Caco-2 (cell line): ENCODE measurements at regions of chr6 and their contacts with region 1.

Region 1: GRCh38 chr6:11496152-11497060 is 41.1 kb upstream of the TMEM170B start:
- DNase-seq: peak; percentile 69 to 84
- H3K4me3 ChIP-seq: no peak overlapping the region
- H3K4me3 Mint-ChIP-seq: no peak overlapping the region
- H3K27ac Mint-ChIP-seq: no peak overlapping the region
- H3K4me1 ChIP-seq: peaks cover 18% of the 10 kb centered on the region; the same call in 1 of the 2 replicates
- H3K4me1 Mint-ChIP-seq: peaks cover 7% of the 10 kb centered on the region
- H3K27me3 ChIP-seq: no peaks in the 10 kb centered on the region
- H3K27me3 Mint-ChIP-seq: no peaks in the 10 kb centered on the region
- CTCF ChIP-seq: peak; percentile 87 to 96

Region 2: DNA sequence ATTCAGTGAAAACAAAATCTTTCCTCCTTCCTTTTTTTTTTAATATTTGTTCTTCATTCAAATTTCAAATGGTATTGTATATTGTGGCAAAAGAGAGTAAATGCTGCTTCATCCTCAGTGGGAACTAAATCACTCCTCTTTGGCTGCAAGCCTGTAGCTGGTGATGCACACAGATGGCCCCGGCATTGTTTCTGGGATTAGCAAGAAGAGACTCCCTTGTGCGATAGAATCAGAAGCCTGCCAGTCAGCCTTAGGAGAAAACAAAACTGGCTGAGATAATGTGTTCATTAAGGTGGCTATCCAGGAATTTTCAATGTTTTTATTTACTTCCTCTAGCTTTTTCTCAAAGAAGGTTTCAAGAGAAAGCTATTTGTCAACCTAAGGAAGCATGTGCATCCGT is 431.6 kb before region 1 on chr6:
- CTCF ChIA-PET with region 1: no interaction called
- POLR2A ChIA-PET with region 1: no interaction called
- intact Hi-C with region 1: loop called (anchors 1 kb)
- DNase-seq: no peak
- H3K4me3 ChIP-seq: no peak overlapping the region
- H3K4me3 Mint-ChIP-seq: no peak overlapping the region
- H3K27ac Mint-ChIP-seq: no peak overlapping the region
- H3K4me1 ChIP-seq: peaks cover 36% of the 10 kb centered on the region
- H3K4me1 Mint-ChIP-seq: peaks cover 32% of the 10 kb centered on the region
- H3K27me3 ChIP-seq: no peaks in the 10 kb centered on the region
- H3K27me3 Mint-ChIP-seq: no peaks in the 10 kb centered on the region
- CTCF ChIP-seq: no peak

Region 3: GRCh38 chr6:11172501-11173332 is 323.7 kb before region 1 on chr6:
- CTCF ChIA-PET with region 1: interaction called, 3 read pairs
- POLR2A ChIA-PET with region 1: no interaction called
- intact Hi-C with region 1: loop called (anchors 1 kb)
- DNase-seq: peak; percentile 46 to 59
- H3K4me3 ChIP-seq: no peak overlapping the region
- H3K4me3 Mint-ChIP-seq: no peak overlapping the region
- H3K27ac Mint-ChIP-seq: no peak overlapping the region
- H3K4me1 ChIP-seq: no peaks in the 10 kb centered on the region; the same call in 1 of the 2 replicates
- H3K4me1 Mint-ChIP-seq: no peaks in the 10 kb centered on the region
- H3K27me3 ChIP-seq: no peaks in the 10 kb centered on the region
- H3K27me3 Mint-ChIP-seq: no peaks in the 10 kb centered on the region
- CTCF ChIP-seq: peak; percentile 55 to 66

Region 4: GRCh38 chr6:11232193-11232769 is 264.1 kb before region 1 on chr6 and contains the start of gene NEDD9:
- CTCF ChIA-PET with region 1: interaction called, 5 read pairs
- POLR2A ChIA-PET with region 1: interaction called, 4 read pairs
- intact Hi-C with region 1: loop called (anchors 1 kb)
- DNase-seq: peak; percentile 94 to 96
- H3K4me3 ChIP-seq: peak within 1 kb of the TSS; percentile 62
- H3K4me3 Mint-ChIP-seq: peak within 1 kb of the TSS; percentile 78
- H3K27ac Mint-ChIP-seq: peak within 1 kb of the TSS; percentile 85
- H3K4me1 ChIP-seq: peaks cover 32% of the 10 kb centered on the region
- H3K4me1 Mint-ChIP-seq: peaks cover 45% of the 10 kb centered on the region
- H3K27me3 ChIP-seq: no peaks in the 10 kb centered on the region
- H3K27me3 Mint-ChIP-seq: no peaks in the 10 kb centered on the region
- CTCF ChIP-seq: no peak
- total RNA-seq, gene NEDD9: 33.2 and 36.2 TPM in 2 replicates

Region 5: GRCh38 chr6:11343963-11344747 is 152.3 kb before region 1 on chr6:
- CTCF ChIA-PET with region 1: no interaction called
- POLR2A ChIA-PET with region 1: no interaction called
- intact Hi-C with region 1: loop called (anchors 1 kb)
- DNase-seq: peak; percentile 85 to 90
- H3K4me3 ChIP-seq: no peak overlapping the region
- H3K4me3 Mint-ChIP-seq: peak overlapping the region; percentile 35
- H3K27ac Mint-ChIP-seq: peak overlapping the region; percentile 92
- H3K4me1 ChIP-seq: peaks cover 42% of the 10 kb centered on the region
- H3K4me1 Mint-ChIP-seq: peaks cover 44% of the 10 kb centered on the region
- H3K27me3 ChIP-seq: no peaks in the 10 kb centered on the region
- H3K27me3 Mint-ChIP-seq: no peaks in the 10 kb centered on the region
- CTCF ChIP-seq: no peak

Region 6: DNA sequence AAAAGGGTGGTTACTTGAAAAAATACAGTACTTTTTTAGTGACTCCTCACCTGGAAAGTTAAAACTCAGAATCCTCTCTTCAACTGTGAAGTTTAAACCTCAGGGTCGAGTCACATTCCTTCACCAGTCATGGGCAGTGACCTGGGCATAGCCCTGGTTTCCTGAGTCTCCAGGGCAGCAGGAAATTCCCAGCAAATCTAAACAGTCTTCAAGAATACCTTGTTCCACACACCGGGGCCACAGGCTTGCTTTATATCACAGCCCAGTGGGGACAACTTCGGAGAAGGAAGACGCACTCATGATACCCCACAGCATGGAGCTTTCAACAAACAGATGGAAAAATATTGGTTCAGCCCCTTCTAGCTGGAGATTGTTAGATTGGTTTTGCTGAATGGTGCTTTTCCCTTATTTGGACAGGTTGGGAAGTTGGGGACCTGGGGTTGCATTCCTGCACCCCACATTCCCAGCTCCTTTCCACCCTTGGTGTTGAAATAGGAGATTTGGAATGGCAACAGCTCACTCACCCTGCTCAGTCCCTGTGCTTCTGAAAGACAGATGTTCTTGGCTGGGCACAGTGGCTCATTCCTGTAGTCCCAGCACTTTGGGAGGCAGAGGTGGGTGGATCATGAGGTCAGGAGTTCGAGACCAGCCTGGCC is 71.9 kb before region 1 on chr6:
- CTCF ChIA-PET with region 1: no interaction called
- POLR2A ChIA-PET with region 1: no interaction called
- intact Hi-C with region 1: no loop called
- DNase-seq: no peak
- H3K4me3 ChIP-seq: no peak overlapping the region
- H3K4me3 Mint-ChIP-seq: no peak overlapping the region
- H3K27ac Mint-ChIP-seq: peak overlapping the region; percentile 11
- H3K4me1 ChIP-seq: peaks cover 47% of the 10 kb centered on the region
- H3K4me1 Mint-ChIP-seq: peaks cover 49% of the 10 kb centered on the region
- H3K27me3 ChIP-seq: no peaks in the 10 kb centered on the region
- H3K27me3 Mint-ChIP-seq: no peaks in the 10 kb centered on the region
- CTCF ChIP-seq: no peak

Region 7: GRCh38 chr6:11434565-11435326 is 61.7 kb before region 1 on chr6:
- CTCF ChIA-PET with region 1: interaction called, 3 read pairs
- POLR2A ChIA-PET with region 1: no interaction called
- intact Hi-C with region 1: loop called (anchors 2 kb)
- DNase-seq: peak; percentile 81 to 84
- H3K4me3 ChIP-seq: no peak overlapping the region; the same call in 1 of the 2 replicates
- H3K4me3 Mint-ChIP-seq: peak overlapping the region; percentile 28
- H3K27ac Mint-ChIP-seq: peak overlapping the region; percentile 58
- H3K4me1 ChIP-seq: peaks cover 50% of the 10 kb centered on the region
- H3K4me1 Mint-ChIP-seq: peaks cover 57% of the 10 kb centered on the region
- H3K27me3 ChIP-seq: no peaks in the 10 kb centered on the region
- H3K27me3 Mint-ChIP-seq: no peaks in the 10 kb centered on the region
- CTCF ChIP-seq: no peak